Posterior vena cava (tissue), 2 donors: ENCODE measurements at regions of chr7 and their contacts with region 1.

Region 1: GRCh38 chr7:108662778-108663362 is 93.2 kb downstream of the DNAJB9 start:
- DNase-seq: no peak

Region 2: DNA sequence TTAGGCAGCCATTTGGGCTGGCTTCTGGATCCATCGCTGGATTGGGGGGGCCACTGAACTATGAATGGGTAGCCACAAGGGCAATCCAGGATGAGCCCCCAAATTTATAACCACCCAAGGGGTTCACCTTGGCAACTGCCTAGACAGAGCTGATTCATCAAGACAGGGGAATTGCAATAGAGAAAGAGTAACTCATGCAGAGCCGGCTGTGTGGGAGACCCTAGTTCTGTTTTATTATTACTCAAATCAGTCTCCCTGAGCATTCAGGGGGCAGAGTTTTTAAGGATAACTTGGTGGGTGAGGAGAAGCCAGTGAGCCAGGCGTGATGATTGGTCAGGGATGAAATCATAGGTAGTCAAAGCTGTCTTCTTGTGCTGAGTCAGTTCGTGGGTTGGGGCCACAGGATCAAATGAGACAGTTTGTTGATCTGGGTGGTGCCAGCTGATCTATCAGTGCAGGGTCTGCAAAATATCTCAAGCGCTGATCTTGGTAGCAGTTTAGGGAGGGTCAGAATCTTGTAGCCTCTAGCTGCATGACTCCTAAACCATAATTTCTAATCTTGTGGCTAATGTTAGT is 35.3 kb before region 1 on chr7:
- intact Hi-C with region 1: loop called in 1 of 2 experiments (anchors 1 kb)
- DNase-seq: no peak